Activated CD4-positive, alpha-beta memory T cell treated with anti-CD3 and anti-CD28 coated beads for 36 hours (primary cell): ENCODE measurements at regions of chr16 and their contacts with region 1.

Region 1: DNA sequence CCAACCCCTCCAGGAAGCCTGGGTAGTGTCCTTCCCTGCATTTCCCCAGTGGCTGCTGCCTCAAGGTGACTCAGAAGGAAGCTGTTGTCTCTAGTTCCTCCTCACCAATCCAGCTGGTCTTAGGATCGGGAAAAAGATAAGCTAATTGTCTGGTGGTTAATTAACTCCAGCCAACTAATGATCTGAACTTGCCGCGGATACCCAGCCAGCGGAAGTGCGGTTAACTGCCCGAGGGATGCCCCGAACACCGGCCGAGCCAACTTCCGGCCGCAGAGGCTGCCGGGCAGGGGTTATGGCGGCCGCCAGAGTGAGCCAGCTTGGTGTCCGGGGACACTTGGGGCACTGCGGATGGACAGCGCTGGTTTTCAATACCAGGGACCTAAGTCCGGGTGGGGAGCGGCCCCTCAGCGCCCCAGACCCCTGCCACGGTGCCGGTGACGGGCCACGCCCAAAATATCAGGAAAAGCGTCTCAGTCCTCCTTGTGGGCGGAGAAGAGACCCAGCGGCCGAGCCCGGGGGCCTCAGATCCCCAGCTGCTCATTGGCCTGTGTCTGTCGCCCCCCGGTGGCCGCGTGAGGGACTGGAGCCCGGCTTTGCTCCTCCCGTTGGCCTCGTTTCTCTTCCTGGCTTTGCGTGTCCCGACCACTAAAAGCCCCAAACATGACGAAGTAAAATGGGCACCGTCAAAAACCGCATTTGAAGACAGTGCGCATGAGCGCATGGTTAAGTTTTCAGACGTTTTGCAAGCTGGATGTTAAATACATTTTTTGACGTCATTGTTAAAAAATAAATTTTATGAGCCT is 10.2 kb upstream of the PRSS22 start:
- DNase-seq: peak; percentile 99
- H3K4me3 Mint-ChIP-seq: peak overlapping the region; percentile 91
- H3K27ac Mint-ChIP-seq: peak overlapping the region; percentile 90
- H3K4me1 Mint-ChIP-seq: peaks cover 12% of the 10 kb centered on the region
- H3K27me3 Mint-ChIP-seq: no peaks in the 10 kb centered on the region

Region 2: DNA sequence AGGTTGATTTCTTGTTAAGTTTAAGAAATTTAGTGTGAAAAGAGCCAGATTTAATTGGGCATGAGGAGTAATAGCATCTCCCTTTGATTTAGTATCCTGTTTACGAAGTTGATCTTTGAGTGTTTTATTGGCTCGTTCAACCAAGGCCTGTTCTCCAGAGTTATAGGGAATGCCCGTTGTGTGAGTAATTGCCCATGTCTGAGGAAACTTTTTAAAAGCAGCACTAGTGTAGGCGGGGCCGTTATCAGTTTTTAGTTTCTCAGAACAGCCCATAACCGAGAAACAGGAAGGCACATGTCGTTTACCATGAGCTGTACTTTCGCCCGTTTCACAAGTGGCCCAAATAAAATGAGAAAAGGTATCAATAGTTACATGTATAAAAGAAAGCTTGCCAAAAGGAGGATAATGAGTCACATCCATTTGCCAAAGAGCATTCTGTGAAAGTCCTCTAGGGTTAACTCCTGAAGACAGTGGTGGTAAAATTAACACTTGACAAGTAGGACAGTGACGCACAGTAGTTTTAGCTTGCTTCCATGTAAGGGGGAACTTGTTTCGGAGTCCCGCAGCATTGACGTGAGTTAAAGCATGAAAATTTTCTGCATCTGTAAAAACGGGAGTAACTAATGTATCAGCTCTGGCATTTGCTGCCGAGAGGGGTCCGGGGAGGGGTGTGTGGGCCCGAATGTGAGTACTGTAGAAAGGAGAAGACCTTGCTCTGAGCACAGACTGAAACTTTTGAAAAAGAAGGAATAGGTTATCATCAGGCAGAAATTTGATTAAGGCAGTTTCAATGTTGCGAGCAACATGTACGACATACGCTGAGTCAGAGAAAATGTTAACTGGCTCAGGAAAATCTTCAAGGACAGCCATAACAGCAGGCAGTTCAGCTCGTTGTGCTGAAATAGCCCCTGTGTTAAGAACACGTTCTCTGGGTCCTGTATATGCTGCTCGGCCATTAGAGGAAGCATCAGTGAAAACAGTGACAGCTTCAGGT is 204.3 kb before region 1 on chr16:
- CTCF ChIA-PET with region 1: no interaction called
- POLR2A ChIA-PET with region 1: interaction called, 3 read pairs
- intact Hi-C with region 1: loop called (anchors 10 kb)
- DNase-seq: peak; percentile 87
- H3K4me3 Mint-ChIP-seq: peak overlapping the region; percentile 88
- H3K27ac Mint-ChIP-seq: peak overlapping the region; percentile 98
- H3K4me1 Mint-ChIP-seq: peaks cover 79% of the 10 kb centered on the region
- H3K27me3 Mint-ChIP-seq: no peaks in the 10 kb centered on the region

Region 3: GRCh38 chr16:2777231-2777902 is 90.8 kb before region 1 on chr16 and contains the start of gene ELOB:
- CTCF ChIA-PET with region 1: interaction called, 14 read pairs
- POLR2A ChIA-PET with region 1: interaction called, 4 read pairs
- intact Hi-C with region 1: loop called (anchors 5 kb)
- DNase-seq: peak; percentile 93
- H3K4me3 Mint-ChIP-seq: peak within 1 kb of the TSS; percentile 96
- H3K27ac Mint-ChIP-seq: peak within 1 kb of the TSS; percentile 98
- H3K4me1 Mint-ChIP-seq: peaks cover 31% of the 10 kb centered on the region
- H3K27me3 Mint-ChIP-seq: no peaks in the 10 kb centered on the region
- total RNA-seq, gene ELOB: 165 to 175 TPM

Region 4: GRCh38 chr16:2848933-2849725 is 19.1 kb before region 1 on chr16:
- CTCF ChIA-PET with region 1: interaction called, 46 read pairs
- POLR2A ChIA-PET with region 1: no interaction called
- intact Hi-C with region 1: no loop called
- DNase-seq: no peak
- H3K4me3 Mint-ChIP-seq: no peak overlapping the region
- H3K27ac Mint-ChIP-seq: no peak overlapping the region
- H3K4me1 Mint-ChIP-seq: peaks cover 12% of the 10 kb centered on the region
- H3K27me3 Mint-ChIP-seq: peaks cover 7% of the 10 kb centered on the region

Region 5: DNA sequence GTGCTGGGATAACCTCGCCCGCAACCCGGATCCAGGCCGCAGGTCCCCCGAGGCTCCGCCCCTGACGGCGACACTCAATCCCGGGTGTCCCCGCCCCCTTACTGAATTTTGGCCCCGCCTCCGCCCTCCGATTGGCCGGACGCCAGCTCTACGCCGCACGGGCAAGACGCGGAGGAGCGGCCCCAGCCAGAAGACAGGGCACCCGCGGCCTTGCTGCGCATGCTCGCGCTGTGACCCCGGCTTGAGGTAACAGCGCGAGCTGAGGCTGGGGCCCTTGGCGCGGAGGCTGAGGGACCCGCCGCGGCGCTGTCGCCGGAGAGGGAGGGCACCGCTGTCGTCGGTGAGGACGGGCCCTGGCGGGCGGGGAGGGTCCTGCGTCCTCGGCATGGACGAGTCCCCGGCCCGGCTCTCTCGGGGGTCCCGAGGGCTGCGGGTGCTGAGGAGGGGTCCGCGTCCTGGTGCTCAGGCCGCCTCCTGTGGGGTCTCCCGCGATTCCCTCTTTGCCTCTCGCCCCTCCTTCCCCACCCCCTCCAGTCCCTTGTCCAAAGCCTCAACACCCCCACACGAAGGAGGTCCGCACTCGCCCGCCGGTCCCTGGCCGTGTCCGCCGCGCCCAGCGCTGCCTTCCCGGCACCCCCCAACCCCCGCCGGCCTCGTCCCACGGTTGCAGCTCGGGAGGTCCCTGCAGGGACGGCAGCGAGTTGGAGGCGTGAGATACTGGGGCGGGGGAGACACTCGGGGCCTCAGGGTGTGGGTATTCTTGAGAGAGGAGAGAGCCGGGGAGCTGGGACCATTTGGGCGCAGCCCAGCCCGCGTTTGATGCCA is 15.1 kb after region 1 on chr16 and contains the start of gene FLYWCH2:
- CTCF ChIA-PET with region 1: interaction called, 21 read pairs
- POLR2A ChIA-PET with region 1: interaction called, 19 read pairs
- intact Hi-C with region 1: no loop called
- DNase-seq: peak; percentile 100
- H3K4me3 Mint-ChIP-seq: peak within 1 kb of the TSS; percentile 90
- H3K27ac Mint-ChIP-seq: peak within 1 kb of the TSS; percentile 97
- H3K4me1 Mint-ChIP-seq: peaks cover 11% of the 10 kb centered on the region
- H3K27me3 Mint-ChIP-seq: no peaks in the 10 kb centered on the region
- total RNA-seq, gene FLYWCH2: 19.1 to 19.4 TPM

Region 6: GRCh38 chr16:2919511-2920255 is 51.5 kb after region 1 on chr16:
- CTCF ChIA-PET with region 1: interaction called, 19 read pairs
- POLR2A ChIA-PET with region 1: no interaction called
- intact Hi-C with region 1: loop called (anchors 5 kb)
- DNase-seq: peak; percentile 70
- H3K4me3 Mint-ChIP-seq: no peak overlapping the region
- H3K27ac Mint-ChIP-seq: no peak overlapping the region
- H3K4me1 Mint-ChIP-seq: peaks cover 15% of the 10 kb centered on the region
- H3K27me3 Mint-ChIP-seq: no peaks in the 10 kb centered on the region

Region 7: DNA sequence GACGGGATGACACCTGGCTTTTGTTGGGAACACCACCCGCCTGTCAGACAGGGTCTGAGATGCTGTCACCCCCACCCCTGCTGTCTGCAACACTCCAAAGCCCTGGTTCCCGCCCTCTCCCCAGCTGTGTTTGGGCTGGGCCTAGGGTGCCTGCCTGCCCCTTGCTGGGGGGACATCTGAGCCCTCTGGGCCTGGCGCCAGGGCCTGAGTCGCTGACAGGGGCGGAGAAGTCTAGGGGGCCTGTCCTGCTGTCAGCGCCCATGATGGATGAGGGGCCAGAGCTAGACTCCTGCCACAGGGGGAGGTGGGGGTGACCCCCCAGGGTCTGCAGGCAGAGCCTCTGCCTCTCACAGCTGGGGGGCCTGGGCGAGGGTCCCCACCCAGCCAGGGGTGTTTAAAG is 119.7 kb after region 1 on chr16:
- CTCF ChIA-PET with region 1: no interaction called
- POLR2A ChIA-PET with region 1: no interaction called
- intact Hi-C with region 1: no loop called
- DNase-seq: no peak
- H3K4me3 Mint-ChIP-seq: no peak overlapping the region
- H3K27ac Mint-ChIP-seq: no peak overlapping the region
- H3K4me1 Mint-ChIP-seq: peaks cover 4% of the 10 kb centered on the region
- H3K27me3 Mint-ChIP-seq: peaks cover 2% of the 10 kb centered on the region